ENCODE measurements at regions of chr2 and their contacts with region 1.

Region 1: GRCh38 chr2:57100436-57100835 is 916.6 kb downstream of the CCDC85A start:
- DNase-seq: no peak
- ATAC-seq: no peak
- H3K4me3 ChIP-seq: no peak overlapping the region
- H3K27ac ChIP-seq: no peak overlapping the region
- H3K4me1 ChIP-seq: no peaks in the 10 kb centered on the region
- H3K27me3 ChIP-seq: no peaks in the 10 kb centered on the region
- CTCF ChIP-seq: no peak

Region 2: GRCh38 chr2:56801770-56802169 is 298.7 kb before region 1 on chr2:
- intact Hi-C with region 1: no loop called
- DNase-seq: no peak
- ATAC-seq: no peak
- H3K4me3 ChIP-seq: no peak overlapping the region
- H3K27ac ChIP-seq: no peak overlapping the region
- H3K4me1 ChIP-seq: no peaks in the 10 kb centered on the region
- H3K27me3 ChIP-seq: no peaks in the 10 kb centered on the region
- CTCF ChIP-seq: no peak

Region 3: GRCh38 chr2:56971383-56971974 is 129.0 kb before region 1 on chr2:
- intact Hi-C with region 1: no loop called
- DNase-seq: no peak
- ATAC-seq: no peak
- H3K4me3 ChIP-seq: no peak overlapping the region
- H3K27ac ChIP-seq: no peak overlapping the region
- H3K4me1 ChIP-seq: no peaks in the 10 kb centered on the region
- H3K27me3 ChIP-seq: no peaks in the 10 kb centered on the region
- CTCF ChIP-seq: no peak

Region 4: GRCh38 chr2:57711991-57712390 is 611.6 kb after region 1 on chr2:
- intact Hi-C with region 1: loop called in 1 of 10 experiments (anchors 5 kb)
- DNase-seq: no peak
- ATAC-seq: no peak
- H3K4me3 ChIP-seq: no peak overlapping the region
- H3K27ac ChIP-seq: no peak overlapping the region
- H3K4me1 ChIP-seq: no peaks in the 10 kb centered on the region
- H3K27me3 ChIP-seq: no peaks in the 10 kb centered on the region
- CTCF ChIP-seq: no peak

Measured in heart right ventricle (tissue), 16 donors.